MCF 10A (cell line): ENCODE measurements at regions of chr19 and their contacts with region 1.

Region 1: DNA sequence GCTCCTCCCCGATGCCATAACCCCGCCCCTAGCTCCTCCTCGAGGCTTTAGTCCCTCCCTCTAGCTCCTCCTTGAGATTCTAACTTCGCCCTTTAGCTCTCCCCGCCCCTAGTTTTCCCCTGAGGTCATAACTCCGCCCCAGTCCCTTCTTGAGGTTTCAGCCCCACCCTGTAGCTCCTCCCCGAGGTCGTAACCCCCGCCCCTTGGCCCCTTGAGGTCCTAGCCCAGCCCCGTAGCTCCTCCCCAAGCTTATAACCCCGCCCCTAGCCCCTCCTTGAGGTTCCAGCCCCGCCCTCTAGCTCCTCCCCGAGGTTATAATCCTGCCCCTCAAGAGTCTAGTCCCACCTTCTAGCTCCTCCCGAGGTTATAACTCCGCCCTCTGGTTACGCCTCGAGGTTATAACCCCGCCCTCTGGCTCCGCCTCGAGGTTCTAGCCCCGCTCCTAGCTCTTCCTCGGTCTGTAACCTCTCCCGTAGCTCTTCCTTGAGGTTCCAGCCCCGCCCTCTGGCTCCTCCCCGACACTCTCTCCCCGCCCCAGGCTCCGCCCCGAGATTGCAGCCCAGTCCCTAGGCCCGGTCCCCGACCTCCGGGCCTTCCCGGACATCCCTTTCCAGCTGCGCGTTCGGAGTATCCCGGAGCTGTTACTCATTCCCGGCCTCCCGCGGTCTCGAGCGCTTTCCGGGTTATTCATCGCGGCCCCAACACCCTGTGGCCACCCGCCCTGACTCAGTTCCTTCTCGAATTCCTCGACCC is 1.4 kb downstream of the PLAUR start:
- DNase-seq: peak; percentile 100
- H3K4me3 Mint-ChIP-seq: peak overlapping the region; percentile 78
- H3K27ac Mint-ChIP-seq: peak overlapping the region; percentile 79
- H3K4me1 Mint-ChIP-seq: peaks cover 24% of the 10 kb centered on the region
- H3K27me3 Mint-ChIP-seq: no peaks in the 10 kb centered on the region
- CTCF ChIP-seq: no peak

Region 2: GRCh38 chr19:43532962-43533545 is 135.5 kb before region 1 on chr19 and contains the start of gene ZNF575:
- CTCF ChIA-PET with region 1: interaction called, 8 read pairs
- POLR2A ChIA-PET with region 1: interaction called, 13 read pairs
- intact Hi-C with region 1: loop called (anchors 10 kb)
- DNase-seq: peak; percentile 92
- H3K4me3 Mint-ChIP-seq: peak within 1 kb of the TSS; percentile 78
- H3K27ac Mint-ChIP-seq: peak within 1 kb of the TSS; percentile 3
- H3K4me1 Mint-ChIP-seq: peaks cover 8% of the 10 kb centered on the region
- H3K27me3 Mint-ChIP-seq: no peaks in the 10 kb centered on the region
- CTCF ChIP-seq: no peak
- total RNA-seq, gene ZNF575: 0.81 and 1.1 TPM in 2 replicates

Region 3: GRCh38 chr19:43651758-43652545 is 16.6 kb before region 1 on chr19:
- CTCF ChIA-PET with region 1: interaction called, 20 read pairs
- POLR2A ChIA-PET with region 1: no interaction called
- intact Hi-C with region 1: no loop called
- DNase-seq: peak; percentile 75
- H3K4me3 Mint-ChIP-seq: no peak overlapping the region
- H3K27ac Mint-ChIP-seq: peak overlapping the region; percentile 42
- H3K4me1 Mint-ChIP-seq: no peaks in the 10 kb centered on the region
- H3K27me3 Mint-ChIP-seq: no peaks in the 10 kb centered on the region
- CTCF ChIP-seq: peak; percentile 59

Region 4: GRCh38 chr19:43723588-43723987 is 55.0 kb after region 1 on chr19:
- CTCF ChIA-PET with region 1: no interaction called
- POLR2A ChIA-PET with region 1: interaction called, 3 read pairs
- intact Hi-C with region 1: loop called (anchors 1 kb)
- DNase-seq: peak; percentile 48
- H3K4me3 Mint-ChIP-seq: no peak overlapping the region
- H3K27ac Mint-ChIP-seq: no peak overlapping the region
- H3K4me1 Mint-ChIP-seq: peaks cover 6% of the 10 kb centered on the region
- H3K27me3 Mint-ChIP-seq: no peaks in the 10 kb centered on the region
- CTCF ChIP-seq: peak; percentile 35

Region 5: GRCh38 chr19:43754503-43755255 is 86.1 kb after region 1 on chr19 and contains the start of gene SMG9:
- CTCF ChIA-PET with region 1: interaction called, 3 read pairs
- POLR2A ChIA-PET with region 1: interaction called, 53 read pairs
- intact Hi-C with region 1: no loop called
- DNase-seq: peak; percentile 98
- H3K4me3 Mint-ChIP-seq: peak within 1 kb of the TSS; percentile 93
- H3K27ac Mint-ChIP-seq: peak within 1 kb of the TSS; percentile 98
- H3K4me1 Mint-ChIP-seq: peaks cover 68% of the 10 kb centered on the region
- H3K27me3 Mint-ChIP-seq: no peaks in the 10 kb centered on the region
- CTCF ChIP-seq: no peak
- total RNA-seq, gene SMG9: 76.0 and 76.4 TPM in 2 replicates

Region 6: GRCh38 chr19:43784981-43785808 is 116.6 kb after region 1 on chr19:
- CTCF ChIA-PET with region 1: interaction called, 4 read pairs
- POLR2A ChIA-PET with region 1: interaction called, 19 read pairs
- intact Hi-C with region 1: loop called (anchors 1 kb)
- DNase-seq: peak; percentile 89
- H3K4me3 Mint-ChIP-seq: peak overlapping the region; percentile 86
- H3K27ac Mint-ChIP-seq: peak overlapping the region; percentile 90
- H3K4me1 Mint-ChIP-seq: peaks cover 63% of the 10 kb centered on the region
- H3K27me3 Mint-ChIP-seq: no peaks in the 10 kb centered on the region
- CTCF ChIP-seq: peak; percentile 92